ENCODE measurements at regions of chr10 and their contacts with region 1.

Region 1: DNA sequence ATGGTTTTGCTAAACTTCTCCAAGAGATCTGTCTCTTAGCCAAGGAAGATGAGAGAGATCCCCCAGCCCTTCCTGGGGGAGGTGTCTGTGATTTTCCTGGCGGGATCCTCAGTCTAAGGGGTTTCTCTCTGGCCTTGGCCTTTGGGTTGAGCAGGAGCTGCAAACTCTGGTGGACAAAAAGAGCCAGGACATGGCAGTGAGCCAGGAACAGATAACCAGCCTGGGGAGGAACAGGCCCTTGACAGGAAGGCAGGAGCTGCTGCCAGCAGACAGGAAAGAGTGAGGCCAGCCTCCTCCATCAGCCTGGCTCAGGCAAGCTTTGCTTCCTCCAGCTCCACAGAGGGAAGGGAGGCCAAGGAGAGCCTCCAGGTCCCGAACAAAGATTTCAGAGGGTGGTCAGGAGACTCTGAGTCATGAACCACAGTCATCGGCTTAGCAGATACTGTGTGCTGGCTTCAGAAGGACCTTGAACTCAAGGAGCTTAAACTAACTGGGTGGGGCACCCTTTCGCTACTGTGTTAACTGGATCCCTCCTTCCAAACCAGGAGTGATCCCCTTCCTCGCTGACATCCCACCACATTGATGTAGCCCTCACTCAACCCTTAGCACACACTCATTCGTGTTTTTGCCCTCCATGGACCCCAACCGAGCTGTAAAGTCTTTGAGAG is 34.7 kb downstream of the DDIT4 start:
- DNase-seq: peak; percentile 74
- H3K4me3 ChIP-seq: no peak overlapping the region
- H3K27ac ChIP-seq: peak overlapping the region; percentile 47
- H3K4me1 ChIP-seq: peaks cover 28% of the 10 kb centered on the region
- H3K27me3 ChIP-seq: no peaks in the 10 kb centered on the region
- CTCF ChIP-seq: no peak
- POLR2A ChIP-seq: no peak

Region 2: GRCh38 chr10:72297968-72298773 is 10.3 kb before region 1 on chr10:
- CTCF ChIA-PET with region 1: interaction called, 9 read pairs
- POLR2A ChIA-PET with region 1: interaction called, 7 read pairs
- dilution Hi-C with region 1: no loop called
- intact Hi-C with region 1: loop called (anchors 1 kb)
- DNase-seq: peak; percentile 97
- H3K4me3 ChIP-seq: peak overlapping the region in 2 of 3 experiments; percentile 34 to 44
- H3K27ac ChIP-seq: peak overlapping the region; percentile 88
- H3K4me1 ChIP-seq: peaks cover 15% of the 10 kb centered on the region
- H3K27me3 ChIP-seq: no peaks in the 10 kb centered on the region
- CTCF ChIP-seq: no peak
- POLR2A ChIP-seq: no peak

Region 3: DNA sequence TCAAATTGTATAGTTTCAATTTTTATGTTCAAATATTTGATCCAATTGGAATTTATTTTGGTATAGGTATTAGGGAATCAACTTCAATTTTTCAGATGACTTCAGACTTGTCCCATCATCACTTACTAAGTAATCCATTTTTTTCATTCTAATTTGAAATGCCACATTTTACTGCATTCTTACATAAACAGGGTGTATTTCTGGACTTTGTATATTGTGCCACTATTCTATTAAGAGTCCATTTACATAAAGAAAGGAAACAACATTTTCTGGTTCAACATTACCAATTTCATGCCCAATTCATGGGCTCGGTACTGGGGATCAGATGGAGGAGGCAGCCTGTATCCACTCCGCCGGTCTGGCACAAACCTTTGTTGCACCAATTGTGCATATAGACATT is 843.6 kb after region 1 on chr10:
- CTCF ChIA-PET with region 1: no interaction called
- POLR2A ChIA-PET with region 1: no interaction called
- dilution Hi-C with region 1: no loop called
- intact Hi-C with region 1: no loop called
- DNase-seq: no peak
- H3K4me3 ChIP-seq: no peak overlapping the region
- H3K27ac ChIP-seq: no peak overlapping the region
- H3K4me1 ChIP-seq: no peaks in the 10 kb centered on the region
- H3K27me3 ChIP-seq: no peaks in the 10 kb centered on the region
- CTCF ChIP-seq: no peak
- POLR2A ChIP-seq: no peak